ENCODE measurements at regions of chr3 and their contacts with region 1.

Region 1: GRCh38 chr3:183285828-183286457 is 32.9 kb downstream of the B3GNT5 start:
- DNase-seq: peak; percentile 98
- H3K4me3 Mint-ChIP-seq: peak overlapping the region; percentile 44
- H3K27ac Mint-ChIP-seq: peak overlapping the region; percentile 94
- H3K4me1 Mint-ChIP-seq: peaks cover 53% of the 10 kb centered on the region
- H3K27me3 Mint-ChIP-seq: no peaks in the 10 kb centered on the region
- CTCF ChIP-seq: no peak

Region 2: DNA sequence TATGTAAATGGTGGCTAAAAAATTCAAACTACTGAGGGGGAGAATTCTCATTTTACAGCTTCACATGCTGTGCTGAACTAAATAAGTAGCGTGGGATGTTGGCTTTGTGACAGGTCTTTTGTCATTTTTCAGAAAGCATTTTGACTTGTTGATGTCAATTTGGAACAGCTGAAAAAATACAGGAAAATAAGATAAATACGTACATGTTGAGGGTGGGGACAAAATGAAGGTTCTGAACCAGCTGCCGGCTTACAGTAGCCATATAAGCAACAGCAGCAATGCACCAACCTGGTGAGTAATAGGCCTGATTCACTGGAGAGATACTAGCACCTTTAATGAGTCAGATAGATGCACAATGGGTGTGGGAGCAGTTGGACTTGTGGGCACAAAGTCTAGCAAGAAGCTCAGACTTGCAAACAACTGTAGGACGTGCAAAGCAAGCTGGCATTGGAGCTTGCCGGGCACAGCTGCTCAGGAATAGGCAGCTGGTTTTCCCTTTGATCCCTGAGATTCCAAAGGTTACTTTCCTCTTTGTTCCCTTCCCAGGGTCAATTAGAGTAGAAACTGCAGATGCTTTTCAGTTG is 20.0 kb before region 1 on chr3:
- CTCF ChIA-PET with region 1: interaction called, 11 read pairs
- intact Hi-C with region 1: no loop called
- DNase-seq: peak; percentile 68
- H3K4me3 Mint-ChIP-seq: no peak overlapping the region
- H3K27ac Mint-ChIP-seq: no peak overlapping the region
- H3K4me1 Mint-ChIP-seq: peaks cover 19% of the 10 kb centered on the region
- H3K27me3 Mint-ChIP-seq: no peaks in the 10 kb centered on the region
- CTCF ChIP-seq: no peak

Region 3: GRCh38 chr3:183275418-183275817 is 10.5 kb before region 1 on chr3:
- CTCF ChIA-PET with region 1: interaction called, 25 read pairs
- intact Hi-C with region 1: no loop called
- DNase-seq: peak; percentile 64
- H3K4me3 Mint-ChIP-seq: peak overlapping the region; percentile 29
- H3K27ac Mint-ChIP-seq: peak overlapping the region; percentile 63
- H3K4me1 Mint-ChIP-seq: peaks cover 53% of the 10 kb centered on the region
- H3K27me3 Mint-ChIP-seq: no peaks in the 10 kb centered on the region
- CTCF ChIP-seq: no peak

Region 4: GRCh38 chr3:183455089-183455488 is 169.1 kb after region 1 on chr3:
- CTCF ChIA-PET with region 1: no interaction called
- intact Hi-C with region 1: no loop called
- DNase-seq: no peak
- H3K4me3 Mint-ChIP-seq: no peak overlapping the region
- H3K27ac Mint-ChIP-seq: no peak overlapping the region
- H3K4me1 Mint-ChIP-seq: peaks cover 9% of the 10 kb centered on the region
- H3K27me3 Mint-ChIP-seq: no peaks in the 10 kb centered on the region
- CTCF ChIP-seq: no peak

Region 5: DNA sequence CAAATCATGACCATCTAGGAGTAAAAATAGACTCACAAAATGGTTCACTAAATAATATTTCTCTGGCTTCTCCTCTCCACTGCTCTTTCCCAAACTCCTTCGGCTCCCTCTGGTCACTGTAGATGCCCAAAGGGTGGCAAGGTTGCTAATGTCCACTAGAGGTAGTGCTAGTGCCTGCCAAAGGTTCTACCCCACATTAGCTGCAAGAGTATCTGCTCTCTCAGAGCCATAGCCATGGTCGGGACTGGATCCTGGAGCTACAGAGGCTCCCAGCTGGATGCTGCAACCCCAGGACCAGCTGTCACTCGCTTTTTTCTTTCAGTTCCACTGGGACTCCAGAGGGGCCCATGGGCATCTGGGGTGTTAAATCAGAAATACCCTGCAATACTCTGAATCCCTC is 754.1 kb after region 1 on chr3:
- CTCF ChIA-PET with region 1: no interaction called
- intact Hi-C with region 1: no loop called
- DNase-seq: peak; percentile 65
- H3K4me3 Mint-ChIP-seq: no peak overlapping the region
- H3K27ac Mint-ChIP-seq: no peak overlapping the region
- H3K4me1 Mint-ChIP-seq: no peaks in the 10 kb centered on the region
- H3K27me3 Mint-ChIP-seq: peaks cover 44% of the 10 kb centered on the region
- CTCF ChIP-seq: peak; percentile 76